Left cardiac atrium (tissue), 4 donors: ENCODE measurements at regions of chr3 and their contacts with region 1.

Region 1: DNA sequence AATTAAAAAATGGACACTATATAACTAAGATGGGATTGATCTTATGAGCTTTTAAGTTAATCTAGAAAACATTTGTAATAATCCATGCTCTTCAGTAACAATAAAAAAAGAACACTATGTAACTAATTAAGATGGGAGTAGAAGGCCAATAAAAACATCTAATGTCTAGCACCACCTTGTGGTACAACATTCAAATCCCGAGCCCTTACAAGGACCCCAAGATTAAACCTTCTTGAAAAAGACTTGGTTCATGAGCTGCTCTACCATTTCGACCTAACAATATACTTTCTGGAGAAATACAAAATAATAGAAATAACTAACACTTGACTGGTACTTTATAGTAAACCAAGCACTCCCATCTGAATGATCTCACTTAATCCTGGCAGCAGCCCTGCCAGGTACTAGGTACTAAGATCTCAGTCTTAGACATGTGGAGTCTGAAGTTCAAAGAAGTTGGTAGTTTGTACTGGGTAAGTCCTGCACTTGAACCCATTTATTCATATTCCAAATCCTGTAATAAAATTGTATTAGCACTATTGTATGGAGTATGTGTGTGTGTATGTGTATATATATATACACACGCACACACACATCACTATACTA is 21.8 kb downstream of the METTL6 start:
- DNase-seq: no peak
- ATAC-seq: peak; percentile 63 to 81

Region 2: GRCh38 chr3:15205934-15206661 is 199.5 kb before region 1 on chr3 and contains the start of gene CAPN7:
- intact Hi-C with region 1: loop called (anchors 5 to 10 kb)
- DNase-seq: peak; percentile 97
- ATAC-seq: peak; percentile 98 to 99
- total RNA-seq, gene CAPN7: 28.4 to 28.9 TPM